ENCODE measurements at regions of chr3 and their contacts with region 1.

Region 1: GRCh38 chr3:28012830-28013229 is 228.6 kb upstream of the CMC1 start:
- DNase-seq: no peak
- ATAC-seq: no peak
- H3K4me3 ChIP-seq: no peak overlapping the region
- H3K27ac ChIP-seq: no peak overlapping the region
- H3K4me1 ChIP-seq: no peaks in the 10 kb centered on the region
- H3K27me3 ChIP-seq: no peaks in the 10 kb centered on the region
- CTCF ChIP-seq: no peak

Region 2: DNA sequence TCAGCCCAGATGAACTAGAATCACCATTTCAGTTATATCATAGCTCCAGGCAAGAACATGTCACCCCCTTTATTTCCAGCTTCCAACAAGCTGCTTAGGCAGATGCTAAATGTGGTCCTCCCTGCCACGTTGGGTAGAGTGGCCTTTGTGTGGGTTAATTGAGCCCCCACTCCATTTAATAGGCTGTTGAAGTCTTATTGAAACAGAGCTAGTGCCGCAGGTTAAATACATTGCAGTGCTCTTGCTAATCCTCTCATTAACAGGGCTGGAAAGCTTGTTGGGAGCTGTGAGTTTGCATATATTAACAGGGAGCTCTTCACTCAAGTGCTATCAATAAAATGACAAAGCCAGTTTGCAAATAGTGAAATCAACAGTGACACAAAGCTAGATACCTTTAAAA is 19.8 kb before region 1 on chr3:
- CTCF ChIA-PET with region 1: interaction called, 4 read pairs
- POLR2A ChIA-PET with region 1: interaction called, 3 read pairs
- intact Hi-C with region 1: loop called (anchors 1 kb)
- DNase-seq: no peak
- ATAC-seq: no peak
- H3K4me3 ChIP-seq: no peak overlapping the region
- H3K27ac ChIP-seq: no peak overlapping the region
- H3K4me1 ChIP-seq: no peaks in the 10 kb centered on the region
- H3K27me3 ChIP-seq: no peaks in the 10 kb centered on the region
- CTCF ChIP-seq: no peak

Region 3: DNA sequence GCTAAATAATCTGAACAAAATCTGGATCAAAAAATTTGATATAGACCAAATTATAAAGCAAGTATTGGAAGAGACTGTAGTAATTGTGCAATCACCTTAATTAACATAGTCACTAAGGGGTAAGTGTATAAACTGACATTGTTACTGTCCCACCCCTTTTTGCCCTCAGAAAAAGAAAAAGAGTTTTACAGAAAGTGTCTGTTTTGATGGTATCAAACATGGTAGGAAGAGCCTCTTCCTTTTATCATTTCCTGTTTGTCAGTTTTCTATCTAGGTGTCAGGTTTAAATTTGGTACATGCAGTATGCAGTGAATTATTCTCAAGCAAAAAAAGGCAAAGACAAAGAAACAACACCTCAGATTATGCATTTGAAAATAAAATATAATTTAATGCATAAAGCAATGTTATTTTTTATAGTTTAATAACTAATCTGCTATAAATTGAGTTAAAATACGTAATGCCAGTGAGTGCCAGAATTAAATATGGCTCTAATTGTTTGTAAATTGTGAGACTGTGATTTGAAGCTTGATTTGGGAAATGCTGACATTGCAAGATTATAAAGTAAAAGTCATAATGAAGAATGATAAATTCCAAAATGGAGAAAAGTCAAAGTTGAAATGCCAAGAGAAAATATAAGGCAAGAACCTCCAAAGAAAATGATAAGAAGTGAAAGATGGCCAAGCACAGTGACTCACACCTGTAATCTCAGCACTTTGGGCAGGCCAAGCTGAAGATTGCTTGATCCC is 198.3 kb after region 1 on chr3:
- CTCF ChIA-PET with region 1: no interaction called
- POLR2A ChIA-PET with region 1: no interaction called
- intact Hi-C with region 1: no loop called
- DNase-seq: no peak
- ATAC-seq: no peak
- H3K4me3 ChIP-seq: no peak overlapping the region
- H3K27ac ChIP-seq: no peak overlapping the region
- H3K4me1 ChIP-seq: no peaks in the 10 kb centered on the region
- H3K27me3 ChIP-seq: no peaks in the 10 kb centered on the region
- CTCF ChIP-seq: no peak

Region 4: DNA sequence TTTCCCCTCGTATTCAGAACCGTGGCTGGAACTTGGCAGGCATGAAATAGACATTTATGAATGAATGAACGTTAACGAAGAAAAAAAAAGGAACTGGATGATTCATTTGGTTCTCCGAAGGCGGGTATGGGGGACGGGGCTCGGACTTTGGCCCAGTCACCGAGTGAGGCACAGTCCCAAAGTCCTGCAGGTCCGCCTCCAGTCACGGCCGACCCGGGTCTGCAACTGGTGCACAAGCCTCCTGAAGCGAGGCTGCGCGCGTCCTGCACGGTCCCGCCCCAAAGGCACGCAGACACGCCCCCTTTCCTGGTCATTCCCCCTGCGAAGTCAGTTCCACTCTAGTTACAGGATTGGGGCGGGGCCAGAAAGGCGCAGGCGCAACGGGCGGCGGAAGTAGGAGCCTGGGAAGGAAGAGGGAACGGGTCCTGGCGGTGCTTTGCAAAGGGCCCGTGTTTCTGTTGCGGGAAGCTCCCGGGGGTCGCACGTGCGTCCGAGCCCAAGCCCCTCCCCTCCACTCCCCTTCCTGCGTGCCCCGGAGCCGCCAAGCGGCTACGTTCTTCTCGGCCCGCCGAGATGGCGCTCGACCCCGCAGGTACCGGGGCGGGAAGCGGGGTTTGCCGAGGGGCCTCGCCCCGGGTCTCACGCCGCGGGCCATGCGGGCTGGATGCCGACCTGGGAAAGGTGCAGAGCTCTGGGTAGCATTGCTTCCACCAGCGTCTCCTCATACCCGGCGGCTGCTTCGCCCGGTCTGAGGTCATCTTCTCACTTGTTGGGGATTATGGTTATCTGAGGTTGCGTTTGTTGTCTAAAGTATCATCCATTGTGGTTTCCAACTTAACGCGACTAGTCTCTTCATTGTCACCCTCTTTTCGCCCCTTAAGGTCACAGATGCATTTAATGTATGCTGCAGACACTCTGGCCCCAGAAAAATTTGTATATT is 228.7 kb after region 1 on chr3 and contains the start of gene CMC1:
- CTCF ChIA-PET with region 1: no interaction called
- POLR2A ChIA-PET with region 1: no interaction called
- intact Hi-C with region 1: no loop called
- DNase-seq: peak; percentile 98
- ATAC-seq: peak; percentile 99
- H3K4me3 ChIP-seq: peak within 1 kb of the TSS; percentile 84
- H3K27ac ChIP-seq: peak within 1 kb of the TSS; percentile 59
- H3K4me1 ChIP-seq: peaks cover 22% of the 10 kb centered on the region
- H3K27me3 ChIP-seq: no peaks in the 10 kb centered on the region
- CTCF ChIP-seq: no peak
- total RNA-seq, gene CMC1: 11.3 and 16.7 TPM in 2 replicates